ENCODE measurements at regions of chr16 and their contacts with region 1.

Region 1: GRCh38 chr16:85675251-85675927 is 13.4 kb downstream of the GINS2 start:
- DNase-seq: no peak
- ATAC-seq: peak; percentile 75
- H3K4me3 ChIP-seq: no peak overlapping the region
- H3K27ac ChIP-seq: no peak overlapping the region
- H3K4me1 ChIP-seq: no peaks in the 10 kb centered on the region
- H3K27me3 ChIP-seq: no peaks in the 10 kb centered on the region
- CTCF ChIP-seq: peak; percentile 54

Region 2: GRCh38 chr16:85610508-85611332 is 64.7 kb before region 1 on chr16:
- CTCF ChIA-PET with region 1: no interaction called
- POLR2A ChIA-PET with region 1: no interaction called
- intact Hi-C with region 1: no loop called
- DNase-seq: peak; percentile 90
- ATAC-seq: peak; percentile 38
- H3K4me3 ChIP-seq: peak overlapping the region; percentile 72
- H3K27ac ChIP-seq: no peak overlapping the region
- H3K4me1 ChIP-seq: peaks cover 24% of the 10 kb centered on the region
- H3K27me3 ChIP-seq: no peaks in the 10 kb centered on the region
- CTCF ChIP-seq: peak; percentile 87

Region 3: GRCh38 chr16:85759631-85760419 is 84.4 kb after region 1 on chr16:
- CTCF ChIA-PET with region 1: no interaction called
- POLR2A ChIA-PET with region 1: no interaction called
- intact Hi-C with region 1: loop called (anchors 5 kb)
- DNase-seq: peak; percentile 52
- ATAC-seq: peak; percentile 66
- H3K4me3 ChIP-seq: no peak overlapping the region
- H3K27ac ChIP-seq: no peak overlapping the region
- H3K4me1 ChIP-seq: peaks cover 3% of the 10 kb centered on the region; the same call in 1 of the 2 replicates
- H3K27me3 ChIP-seq: no peaks in the 10 kb centered on the region
- CTCF ChIP-seq: peak; percentile 80

Measured in PC-3 (cell line).